ENCODE measurements at regions of chr7 and their contacts with region 1.

Region 1: DNA sequence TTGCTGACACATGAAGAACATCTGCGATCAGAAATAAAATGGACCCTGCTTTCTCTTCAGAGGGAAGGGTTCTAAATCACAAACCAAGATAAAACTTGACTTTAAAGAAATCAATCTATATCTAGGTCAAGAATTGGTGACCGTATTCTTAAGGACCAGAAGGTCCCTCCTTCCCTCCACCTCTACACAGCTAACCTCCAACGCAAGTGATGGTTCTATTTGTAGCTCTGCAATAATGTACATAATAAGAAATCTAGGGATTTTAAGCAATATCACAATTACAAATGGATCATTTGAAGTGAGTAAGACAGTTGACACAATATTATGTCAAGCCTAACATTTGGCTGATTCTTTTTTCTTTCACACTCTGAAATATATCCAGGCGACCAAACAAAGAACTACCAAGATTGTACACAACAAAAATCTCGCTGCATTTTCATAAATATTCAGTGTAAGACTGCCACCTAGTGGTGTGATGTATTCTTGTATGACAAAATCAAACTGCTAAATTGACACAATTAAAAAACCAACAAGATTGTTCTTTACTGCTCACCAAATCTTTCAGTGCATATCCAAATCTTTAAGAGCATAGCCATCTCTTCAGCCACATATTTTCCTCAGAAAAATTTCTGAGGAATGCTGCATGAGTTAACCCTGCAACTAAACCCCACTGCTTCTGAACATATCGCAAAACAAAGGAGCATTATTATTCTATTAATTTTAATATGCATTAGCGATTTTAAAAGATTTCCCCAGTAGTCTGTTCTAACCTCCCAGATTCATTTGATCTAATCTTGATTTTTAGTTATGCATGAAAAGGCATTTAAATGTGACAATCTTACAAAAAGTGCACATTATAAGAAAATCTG is 44.5 kb downstream of the ICA1 start:
- DNase-seq: no peak
- ATAC-seq: peak; percentile 55

Region 2: DNA sequence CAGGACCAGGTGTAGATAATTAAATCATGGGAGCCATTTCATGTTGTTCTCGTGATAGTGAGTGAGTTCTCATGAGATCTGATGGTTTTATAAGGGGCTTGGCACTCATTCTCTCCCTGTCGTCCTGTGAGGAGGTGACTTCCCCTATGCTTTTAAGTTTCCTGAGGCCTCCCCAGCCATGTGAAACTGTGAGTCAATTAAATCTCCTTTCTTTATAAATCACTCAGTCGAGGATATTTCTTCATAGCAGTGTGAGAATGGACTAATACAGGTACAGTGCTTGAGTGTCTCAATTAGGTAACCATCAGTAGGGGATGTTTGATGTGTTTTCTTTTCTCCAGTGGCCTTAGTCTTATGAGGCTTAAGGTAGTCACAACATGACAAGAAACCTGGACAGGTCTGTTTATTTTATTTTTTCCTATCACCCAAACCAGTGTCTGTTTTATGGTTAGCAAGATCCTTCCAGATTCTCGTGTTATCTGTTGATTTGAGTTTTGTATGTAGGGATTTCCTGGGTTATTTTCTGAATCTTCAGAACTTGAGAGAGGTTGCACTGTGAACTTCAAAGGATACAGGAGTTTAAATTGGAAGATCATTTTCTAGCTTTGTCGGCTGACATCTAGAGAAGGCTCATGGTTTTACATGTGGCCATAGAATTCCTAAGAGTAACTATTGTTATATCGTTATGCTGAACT is 544.7 kb before region 1 on chr7:
- intact Hi-C with region 1: loop called (anchors 10 kb)
- DNase-seq: no peak
- ATAC-seq: no peak

Region 3: GRCh38 chr7:7761340-7761980 is 456.0 kb before region 1 on chr7:
- intact Hi-C with region 1: loop called (anchors 10 kb)
- DNase-seq: no peak
- ATAC-seq: peak; percentile 74

Region 4: DNA sequence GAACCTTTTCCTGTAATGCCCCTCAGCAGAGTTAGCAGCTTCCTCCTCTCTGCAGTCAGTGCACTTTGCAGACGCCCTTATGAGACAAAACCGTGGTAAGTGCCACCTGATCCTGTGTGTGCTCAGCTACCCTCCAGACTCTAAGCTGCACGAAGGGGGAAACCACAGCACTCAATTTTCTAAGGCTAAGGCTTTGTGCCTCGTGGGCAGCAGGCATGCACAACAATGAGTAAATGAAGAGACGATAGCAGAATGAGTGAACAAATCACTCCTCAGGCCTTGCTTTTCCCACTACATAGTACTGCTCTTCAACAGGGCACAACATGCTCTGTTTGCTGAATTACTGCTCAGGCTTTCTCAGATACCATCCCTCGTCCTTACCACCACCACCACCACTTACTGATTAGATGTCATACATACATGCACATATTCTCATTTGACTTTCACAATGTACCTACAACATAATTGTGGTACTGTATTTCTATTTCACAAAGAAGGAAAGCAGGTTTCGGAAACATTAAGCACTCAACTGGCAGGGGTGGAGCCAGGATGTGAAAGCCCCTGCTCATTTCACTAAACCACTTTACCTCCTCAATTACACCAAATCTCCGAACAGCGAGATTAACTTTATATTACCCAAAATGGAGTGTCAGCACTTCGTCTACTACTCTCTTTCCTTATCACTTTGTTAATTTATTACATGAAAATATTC is 40.9 kb before region 1 on chr7:
- intact Hi-C with region 1: no loop called
- DNase-seq: no peak
- ATAC-seq: peak; percentile 53

Measured in Right ventricle myocardium superior (tissue), 1 donor.